Right ventricle myocardium inferior (tissue), 1 donor: ENCODE measurements at regions of chr6 and their contacts with region 1.

Region 1: DNA sequence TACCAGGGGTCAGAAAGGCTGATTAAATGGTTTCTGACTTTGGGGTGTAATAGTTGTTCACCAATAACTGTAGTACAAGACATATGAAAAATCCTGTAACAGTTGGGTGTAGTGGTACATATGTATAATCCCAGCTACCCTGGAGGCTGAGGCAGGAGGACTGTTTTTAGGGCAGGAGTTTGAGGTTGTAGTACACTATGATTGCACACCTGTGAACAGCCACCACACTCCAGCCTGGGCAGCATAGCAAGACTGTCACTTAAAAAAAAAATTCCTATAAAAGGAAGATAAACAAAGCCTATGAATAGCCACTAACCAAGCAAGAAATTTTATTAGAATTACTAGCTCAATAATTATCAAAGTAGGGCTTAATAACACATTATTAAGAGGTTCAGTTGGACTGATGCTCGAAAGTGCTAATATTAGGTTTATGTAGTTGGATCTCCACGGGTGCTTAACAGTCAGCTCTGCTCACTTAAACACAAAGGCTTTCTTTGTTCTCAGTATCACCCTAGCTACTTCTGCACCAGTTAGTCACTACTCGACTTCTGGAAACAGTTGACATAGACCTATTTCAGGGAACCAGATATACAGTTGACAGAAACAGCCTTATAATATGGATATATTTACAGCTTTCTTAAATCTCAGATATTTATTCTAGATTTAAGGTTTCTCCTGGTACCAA is 113.0 kb downstream of the MTFR2 start:
- DNase-seq: no peak
- ATAC-seq: peak; percentile 95

Region 2: GRCh38 chr6:135820340-135820739 is 316.8 kb before region 1 on chr6:
- intact Hi-C with region 1: no loop called
- DNase-seq: peak; percentile 80
- ATAC-seq: peak; percentile 79

Region 3: GRCh38 chr6:136118787-136119186 is 18.4 kb before region 1 on chr6:
- intact Hi-C with region 1: loop called (anchors 2 kb)
- DNase-seq: no peak
- ATAC-seq: no peak